Ascending aorta (tissue), 2 donors: ENCODE measurements at regions of chr19 and their contacts with region 1.

Region 1: DNA sequence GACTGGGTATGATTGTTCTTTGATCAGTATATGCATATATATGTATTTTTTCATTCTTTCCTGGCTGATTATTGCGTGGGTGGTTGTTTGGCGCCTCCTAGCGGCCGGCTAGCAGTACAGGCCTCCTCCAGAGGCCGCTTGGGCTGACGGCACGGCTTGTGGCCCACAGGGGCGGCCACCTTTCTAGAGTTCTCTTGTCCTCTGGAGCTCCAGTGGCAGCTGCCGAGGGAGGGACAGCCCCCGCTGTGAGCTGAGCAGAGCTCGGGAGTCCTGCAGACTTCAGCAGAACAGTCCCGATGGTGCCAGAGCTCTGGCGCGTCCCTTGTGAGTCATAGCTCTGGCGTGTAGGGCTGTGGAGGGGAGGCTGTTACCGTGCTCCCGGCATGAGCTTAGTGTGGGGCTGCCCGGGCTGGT is 22.5 kb upstream of the ZNF429 start:
- DNase-seq: peak; percentile 26 to 88
- H3K4me3 ChIP-seq: peak overlapping the region in 1 of 2 donors; percentile 25
- H3K27ac ChIP-seq: peak overlapping the region; percentile 30 to 65
- H3K4me1 ChIP-seq: no peaks in the 10 kb centered on the region
- H3K27me3 ChIP-seq: no peaks in the 10 kb centered on the region
- CTCF ChIP-seq: peak; percentile 76 to 89 (median 89)

Region 2: GRCh38 chr19:21202865-21203494 is 279.9 kb before region 1 on chr19:
- intact Hi-C with region 1: loop called (anchors 5 kb)
- DNase-seq: no peak
- H3K4me3 ChIP-seq: no peak overlapping the region
- H3K27ac ChIP-seq: no peak overlapping the region
- H3K4me1 ChIP-seq: no peaks in the 10 kb centered on the region
- H3K27me3 ChIP-seq: no peaks in the 10 kb centered on the region
- CTCF ChIP-seq: peak; percentile 23 to 45 (median 33)

Region 3: GRCh38 chr19:21439201-21439751 is 43.6 kb before region 1 on chr19:
- intact Hi-C with region 1: loop called (anchors 5 kb)
- DNase-seq: no peak
- H3K4me3 ChIP-seq: peak overlapping the region; percentile 34 to 47
- H3K27ac ChIP-seq: peak overlapping the region; percentile 37 to 58
- H3K4me1 ChIP-seq: peaks cover 0 to 8% of the 10 kb centered on the region in 2 donors
- H3K27me3 ChIP-seq: no peaks in the 10 kb centered on the region
- CTCF ChIP-seq: no peak

Region 4: GRCh38 chr19:21568816-21569493 is 86.1 kb after region 1 on chr19:
- intact Hi-C with region 1: no loop called
- DNase-seq: peak; percentile 68 to 90
- H3K4me3 ChIP-seq: peak overlapping the region; percentile 45 to 76
- H3K27ac ChIP-seq: peak overlapping the region in 1 of 2 donors; percentile 70
- H3K4me1 ChIP-seq: no peaks in the 10 kb centered on the region
- H3K27me3 ChIP-seq: no peaks in the 10 kb centered on the region
- CTCF ChIP-seq: no peak

Region 5: DNA sequence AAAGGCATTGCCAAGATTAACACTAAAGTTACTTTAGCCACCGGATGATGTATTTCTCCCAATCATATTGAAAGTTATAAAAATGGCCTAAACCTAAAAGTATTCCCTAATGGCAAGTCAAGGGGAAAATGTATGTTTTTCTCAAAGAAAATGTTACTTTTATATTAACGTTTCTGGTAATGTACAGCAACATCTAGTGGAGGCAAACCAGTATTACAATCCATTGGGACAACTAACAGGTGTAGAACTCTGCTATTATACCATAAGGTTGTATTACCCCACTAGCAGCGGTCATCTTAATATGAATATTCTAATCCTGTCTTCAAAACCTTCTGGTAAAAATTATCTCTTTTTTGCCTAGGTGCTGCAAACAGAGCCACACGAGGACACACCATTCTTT is 215.3 kb after region 1 on chr19:
- intact Hi-C with region 1: loop called (anchors 5 kb)
- DNase-seq: no peak
- H3K4me3 ChIP-seq: no peak overlapping the region
- H3K27ac ChIP-seq: no peak overlapping the region
- H3K4me1 ChIP-seq: no peaks in the 10 kb centered on the region
- H3K27me3 ChIP-seq: no peaks in the 10 kb centered on the region
- CTCF ChIP-seq: peak; percentile 6 to 57 (median 26)